ENCODE measurements at regions of chr2 and their contacts with region 1.

Region 1: GRCh38 chr2:64978514-64979268 is 10.5 kb upstream of the SLC1A4 start:
- DNase-seq: no peak
- ATAC-seq: peak; percentile 71
- H3K4me3 ChIP-seq: no peak overlapping the region
- H3K27ac ChIP-seq: no peak overlapping the region
- H3K4me1 ChIP-seq: peaks cover 25% of the 10 kb centered on the region
- H3K27me3 ChIP-seq: no peaks in the 10 kb centered on the region
- CTCF ChIP-seq: peak; percentile 29 to 36 (median 31); a peak in 4 of 6 replicates
- EP300 ChIP-seq: no peak
- POLR2A ChIP-seq: no peak
- RAD21 ChIP-seq: peak; percentile 36

Region 2: DNA sequence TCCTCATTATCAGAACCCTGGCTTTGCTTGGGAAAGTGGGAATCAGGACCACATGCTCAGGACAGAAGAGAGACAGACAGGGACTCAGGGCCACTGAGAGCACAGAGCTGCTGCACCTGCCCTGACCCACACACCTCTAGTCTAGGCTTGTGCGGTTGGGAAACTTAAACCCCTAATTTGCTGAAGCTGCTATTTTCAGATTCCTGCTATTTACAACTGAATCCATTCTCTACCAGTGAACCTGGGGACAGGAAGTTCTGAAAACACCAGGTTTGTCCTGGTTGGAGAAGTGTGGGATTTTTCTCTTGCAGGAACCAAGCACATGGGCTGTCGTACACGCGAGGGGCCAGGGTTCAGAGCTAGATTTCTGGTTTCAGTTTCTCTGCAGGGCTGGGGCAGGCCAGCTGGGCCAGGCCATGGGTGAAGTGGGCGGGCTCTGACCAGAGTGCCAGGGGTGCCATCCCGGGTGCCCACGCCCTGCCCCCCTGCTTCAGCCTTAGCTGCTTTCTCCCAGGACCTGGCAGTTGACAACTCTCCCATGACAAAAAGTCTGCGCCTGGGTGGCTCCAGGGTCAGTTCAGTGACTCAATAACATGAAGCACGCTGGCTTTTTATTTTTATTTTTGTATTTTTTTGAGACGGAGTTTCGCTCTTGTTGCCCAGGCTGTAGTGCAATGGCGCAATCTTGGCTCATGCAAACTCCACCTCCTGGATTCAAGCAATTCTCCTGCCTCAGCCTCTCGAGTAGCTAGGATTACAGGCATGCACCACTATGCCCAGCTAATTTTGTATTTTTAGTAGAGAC is 40.8 kb before region 1 on chr2:
- CTCF ChIA-PET with region 1: interaction called, 4 read pairs
- POLR2A ChIA-PET with region 1: interaction called, 5 read pairs
- RAD21 ChIA-PET with region 1: interaction called, 8 read pairs
- SMC1A ChIA-PET with region 1: interaction called, 17 read pairs
- in situ Hi-C with region 1: loop called (anchors 10 kb)
- intact Hi-C with region 1: no loop called
- DNase-seq: peak; percentile 77
- ATAC-seq: peak; percentile 70
- H3K4me3 ChIP-seq: peak overlapping the region; percentile 76
- H3K27ac ChIP-seq: peak overlapping the region; percentile 92
- H3K4me1 ChIP-seq: peaks cover 67% of the 10 kb centered on the region
- H3K27me3 ChIP-seq: no peaks in the 10 kb centered on the region
- CTCF ChIP-seq: no peak
- EP300 ChIP-seq: peak in 1 of 2 experiments; percentile 12; a peak in 1 of 4 replicates
- POLR2A ChIP-seq: peak; percentile 60
- RAD21 ChIP-seq: no peak

Region 3: GRCh38 chr2:64963719-64964118 is 15.0 kb before region 1 on chr2:
- CTCF ChIA-PET with region 1: interaction called, 14 read pairs
- POLR2A ChIA-PET with region 1: interaction called, 4 read pairs
- RAD21 ChIA-PET with region 1: interaction called, 3 read pairs
- SMC1A ChIA-PET with region 1: interaction called, 13 read pairs
- in situ Hi-C with region 1: no loop called
- intact Hi-C with region 1: no loop called
- DNase-seq: no peak
- ATAC-seq: no peak; the same call in 2 of the 3 replicates
- H3K4me3 ChIP-seq: no peak overlapping the region
- H3K27ac ChIP-seq: no peak overlapping the region
- H3K4me1 ChIP-seq: no peaks in the 10 kb centered on the region
- H3K27me3 ChIP-seq: no peaks in the 10 kb centered on the region
- CTCF ChIP-seq: 0 out of 6 replicates have a peak, but pooled peaks of 1 of the 3 experiments have one; percentile 6
- EP300 ChIP-seq: no peak
- POLR2A ChIP-seq: no peak
- RAD21 ChIP-seq: 0 out of 2 replicates have a peak, but pooled peaks have one; percentile 17

Region 4: GRCh38 chr2:65040400-65041261 is 61.9 kb after region 1 on chr2:
- CTCF ChIA-PET with region 1: interaction called, 5 read pairs
- POLR2A ChIA-PET with region 1: no interaction called
- RAD21 ChIA-PET with region 1: interaction called, 4 read pairs
- SMC1A ChIA-PET with region 1: interaction called, 3 read pairs
- in situ Hi-C with region 1: no loop called
- intact Hi-C with region 1: loop called (anchors 2 kb)
- DNase-seq: no peak
- ATAC-seq: peak; percentile 99
- H3K4me3 ChIP-seq: no peak overlapping the region
- H3K27ac ChIP-seq: no peak overlapping the region
- H3K4me1 ChIP-seq: peaks cover 2% of the 10 kb centered on the region; the same call in 1 of the 2 replicates
- H3K27me3 ChIP-seq: no peaks in the 10 kb centered on the region
- CTCF ChIP-seq: peak; percentile 93 to 96 (median 95)
- EP300 ChIP-seq: no peak
- POLR2A ChIP-seq: no peak
- RAD21 ChIP-seq: peak; percentile 83